Dorsolateral prefrontal cortex (tissue), 120 donors: ENCODE measurements at regions of chr9 and their contacts with region 1.

Region 1: DNA sequence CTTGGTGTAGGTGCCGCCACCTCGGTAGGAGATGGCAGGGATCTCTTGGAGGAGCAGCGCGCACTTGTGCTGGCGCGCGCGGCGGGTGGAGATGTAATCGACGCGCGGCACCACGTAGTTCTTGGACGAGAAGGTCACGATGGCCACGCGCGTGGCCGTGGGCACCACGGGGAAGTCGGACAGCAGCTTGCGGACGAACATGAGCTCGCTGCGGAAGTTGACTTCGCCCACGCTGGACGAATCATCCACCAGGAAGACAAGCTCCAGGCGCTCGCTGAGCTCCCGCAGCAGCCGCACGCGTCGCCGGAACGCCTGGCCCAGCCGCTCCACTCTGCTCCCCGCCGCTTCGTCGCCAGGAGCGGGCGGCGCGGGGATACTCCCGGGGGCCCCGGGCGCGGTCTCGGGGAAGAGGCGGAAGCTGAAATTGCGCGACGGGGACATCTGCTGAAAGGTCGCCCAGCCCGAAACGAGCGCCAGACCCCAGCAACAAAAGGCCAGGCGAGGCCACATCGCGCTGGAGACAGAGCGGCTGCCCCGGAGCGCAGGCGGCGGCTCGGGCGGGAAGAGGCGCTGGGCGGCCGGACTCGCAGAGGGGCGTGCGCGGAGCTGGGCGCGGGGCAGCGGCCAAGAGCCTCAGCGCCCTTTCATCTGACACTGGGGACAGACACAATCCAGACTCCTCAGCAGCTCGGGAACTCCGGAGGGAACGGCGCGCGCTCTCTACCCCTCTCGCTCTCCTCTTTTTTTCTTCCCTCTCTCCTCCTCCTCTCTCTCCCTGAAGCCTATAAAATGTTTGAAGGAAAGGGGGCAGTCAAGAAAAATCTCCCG is at the start of gene SVEP1:
- DNase-seq: peak; percentile 44 to 85 (median 70)
- H3K4me3 ChIP-seq: peak within 1 kb of the TSS; percentile 38 to 82 (median 69)
- H3K27ac ChIP-seq: peak within 1 kb of the TSS; percentile 15 to 94 (median 84)
- H3K27me3 ChIP-seq: peaks cover 0 to 13% (median 0%) of the 10 kb centered on the region in 45 donors
- CTCF ChIP-seq: peak in 1 of 56 donors; percentile 16
- total RNA-seq, gene SVEP1: 1.8 to 21.3 (median 8.4) TPM

Region 2: DNA sequence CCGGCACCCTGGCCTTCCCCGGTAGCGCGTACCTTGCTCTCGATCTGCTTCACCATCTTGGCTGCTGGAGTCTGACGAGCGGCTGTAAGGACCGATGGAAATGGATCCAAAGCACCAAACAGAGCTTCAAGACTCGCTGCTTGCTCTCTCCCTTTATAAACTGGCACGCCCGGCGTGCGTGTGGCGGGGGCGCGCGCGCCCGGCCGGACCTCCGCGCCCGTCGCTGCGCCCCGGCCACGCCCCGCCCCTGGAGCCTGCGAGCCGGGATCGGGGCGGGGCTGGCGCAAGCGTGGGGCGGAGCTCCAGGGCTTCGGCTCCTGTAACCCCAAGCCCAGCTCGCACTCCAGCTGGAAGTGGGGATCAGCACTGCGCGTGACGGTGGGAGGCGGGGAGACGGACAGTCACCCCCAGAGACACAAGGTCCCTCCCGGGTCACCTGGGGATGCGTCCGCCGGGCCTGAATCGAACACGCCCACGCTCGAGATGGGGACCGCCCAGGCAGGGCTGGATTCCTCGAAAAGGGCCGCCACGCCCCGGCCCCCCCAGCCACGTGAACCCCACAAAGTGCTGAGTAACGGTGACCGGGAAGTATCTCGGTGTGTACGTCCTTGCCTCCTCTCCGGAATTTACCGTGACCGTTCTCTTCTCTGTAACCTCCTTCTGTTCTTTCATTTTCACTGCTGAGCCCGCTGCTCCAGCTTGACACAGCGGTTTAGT is 322.7 kb before region 1 on chr9 and contains the start of gene TXN:
- intact Hi-C with region 1: loop called in 1 of 2 experiments (anchors 5 kb)
- DNase-seq: peak; percentile 64 to 92 (median 85)
- H3K4me3 ChIP-seq: peak within 1 kb of the TSS; percentile 71 to 98 (median 91)
- H3K27ac ChIP-seq: peak within 1 kb of the TSS; percentile 55 to 96 (median 89)
- H3K27me3 ChIP-seq: no peaks in the 10 kb centered on the region
- CTCF ChIP-seq: peak in 3 of 56 donors; percentile 1 to 19 (median 4)
- total RNA-seq, gene TXN: 47.1 to 137 (median 99.2) TPM

Region 3: DNA sequence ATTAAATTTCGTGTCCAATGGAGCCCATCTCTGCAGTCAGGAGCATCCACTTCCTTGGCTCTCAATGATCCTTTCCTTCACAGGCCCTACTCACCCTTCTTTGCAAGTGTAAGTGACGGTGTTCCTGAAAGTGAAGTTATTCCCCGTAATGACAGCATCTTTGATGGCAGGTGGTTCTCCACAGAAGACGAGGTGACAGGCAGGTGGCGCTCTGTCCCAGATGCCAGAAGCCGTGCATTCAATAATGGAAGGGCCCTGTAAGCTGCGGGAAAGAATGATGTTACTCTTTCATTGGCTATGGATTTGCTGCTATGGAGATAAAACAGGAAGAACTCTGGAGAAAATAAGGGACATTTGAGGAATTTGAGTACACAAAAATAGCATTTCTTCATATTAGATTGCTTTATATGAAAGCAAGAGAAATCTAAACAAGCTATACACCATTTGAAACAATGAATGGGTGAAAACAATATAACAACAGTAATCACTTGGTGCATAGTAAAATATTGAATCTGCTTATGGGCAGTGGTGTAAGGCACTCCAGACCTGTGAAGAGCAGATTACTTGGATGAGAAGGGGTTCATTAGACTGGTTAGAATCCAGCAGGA is 151.6 kb before region 1 on chr9:
- intact Hi-C with region 1: loop called in 1 of 2 experiments (anchors 10 kb)
- DNase-seq: peak in 7 of 10 donors; percentile 36 to 60 (median 56)
- H3K4me3 ChIP-seq: no peak overlapping the region
- H3K27ac ChIP-seq: peak overlapping the region in 18 of 59 donors; percentile 0 to 70 (median 21)
- H3K27me3 ChIP-seq: no peaks in the 10 kb centered on the region
- CTCF ChIP-seq: peak in 54 of 56 donors; percentile 27 to 75 (median 54)

Region 4: GRCh38 chr9:110545705-110546104 is 33.5 kb before region 1 on chr9:
- intact Hi-C with region 1: loop called in 1 of 2 experiments (anchors 5 kb)
- DNase-seq: peak in 4 of 10 donors; percentile 27 to 44 (median 34)
- H3K4me3 ChIP-seq: no peak overlapping the region
- H3K27ac ChIP-seq: peak overlapping the region in 37 of 59 donors; percentile 3 to 83 (median 52)
- H3K27me3 ChIP-seq: no peaks in the 10 kb centered on the region
- CTCF ChIP-seq: no peak

Region 5: GRCh38 chr9:110640736-110641135 is 61.5 kb after region 1 on chr9:
- intact Hi-C with region 1: no loop called
- DNase-seq: no peak
- H3K4me3 ChIP-seq: no peak overlapping the region
- H3K27ac ChIP-seq: peak overlapping the region in 44 of 59 donors; percentile 1 to 75 (median 57)
- H3K27me3 ChIP-seq: no peaks in the 10 kb centered on the region
- CTCF ChIP-seq: no peak